Sciatic nerve (tissue), 2 donors: ENCODE measurements at regions of chr13 and their contacts with region 1.

Region 1: DNA sequence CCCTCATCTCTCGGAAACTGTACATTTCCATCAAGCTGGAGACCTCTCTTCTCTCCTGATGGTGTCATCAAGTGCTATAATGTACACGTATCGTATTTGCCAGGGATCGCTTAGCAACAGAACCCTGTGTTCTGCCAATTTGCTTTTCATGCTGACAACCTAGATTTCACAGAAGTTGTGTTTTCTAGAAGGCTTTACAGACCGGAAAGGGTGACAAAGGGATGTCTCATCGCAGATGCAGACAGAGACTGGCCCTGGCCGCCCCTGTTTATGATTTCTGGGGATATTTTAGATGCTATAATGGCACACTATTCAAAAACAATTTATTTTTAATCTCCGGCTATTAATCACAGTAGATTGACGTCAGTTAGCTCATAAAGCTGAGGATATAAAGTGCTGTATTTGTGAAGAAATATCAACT is 291.4 kb downstream of the IRS2 start:
- DNase-seq: no peak
- ATAC-seq: no peak

Region 2: GRCh38 chr13:108444448-108444847 is 1050.5 kb before region 1 on chr13:
- intact Hi-C with region 1: loop called (anchors 10 kb)
- DNase-seq: no peak
- ATAC-seq: no peak